Activated naive CD4-positive, alpha-beta T cell treated with anti-CD3 and anti-CD28 coated beads for 36 hours (primary cell): ENCODE measurements at regions of chr7 and their contacts with region 1.

Region 1: GRCh38 chr7:51162724-51163329 is 153.8 kb downstream of the COBL start:
- DNase-seq: peak; percentile 92
- H3K4me3 Mint-ChIP-seq: no peak overlapping the region
- H3K27ac Mint-ChIP-seq: no peak overlapping the region
- H3K4me1 Mint-ChIP-seq: peaks cover 9% of the 10 kb centered on the region
- H3K27me3 Mint-ChIP-seq: peaks cover 12% of the 10 kb centered on the region

Region 2: DNA sequence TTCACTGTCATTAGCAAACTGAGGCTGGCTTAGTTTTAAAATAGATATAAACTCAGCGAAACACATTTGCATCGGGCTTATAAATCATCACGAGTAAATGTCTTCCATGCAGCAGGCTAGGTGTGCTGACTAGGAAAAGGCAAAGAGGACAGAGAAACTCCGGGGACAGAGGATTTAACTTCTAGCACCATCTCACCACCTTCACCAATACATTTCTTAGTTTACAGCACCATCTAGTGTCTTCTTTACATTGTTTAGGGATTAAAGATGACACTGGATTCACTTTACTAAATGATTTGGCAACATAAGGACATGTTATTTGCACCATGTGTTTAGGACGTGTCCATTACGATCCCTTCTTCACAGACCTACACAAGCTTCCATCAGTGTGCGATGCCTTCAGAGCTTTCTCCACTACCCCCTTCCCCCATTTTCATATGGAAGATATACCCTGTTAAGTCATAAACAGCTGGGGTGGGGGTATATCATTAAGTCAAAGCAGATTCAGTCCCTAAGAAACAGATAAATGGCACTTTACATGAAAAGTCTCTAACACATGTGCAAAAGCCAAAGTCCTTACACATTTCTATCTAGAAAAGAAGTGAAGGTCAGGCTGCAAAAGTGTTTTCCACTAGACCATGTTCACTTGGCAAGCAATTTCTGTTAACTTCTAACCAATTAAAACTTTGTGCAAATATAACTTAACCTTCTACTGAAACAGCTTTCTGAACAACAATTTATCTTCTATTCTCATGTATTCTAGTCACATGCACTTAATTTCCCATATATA is 483.4 kb before region 1 on chr7:
- CTCF ChIA-PET with region 1: interaction called, 6 read pairs
- intact Hi-C with region 1: loop called (anchors 5 kb)
- DNase-seq: no peak
- H3K4me3 Mint-ChIP-seq: no peak overlapping the region
- H3K27ac Mint-ChIP-seq: no peak overlapping the region
- H3K4me1 Mint-ChIP-seq: no peaks in the 10 kb centered on the region
- H3K27me3 Mint-ChIP-seq: no peaks in the 10 kb centered on the region

Region 3: DNA sequence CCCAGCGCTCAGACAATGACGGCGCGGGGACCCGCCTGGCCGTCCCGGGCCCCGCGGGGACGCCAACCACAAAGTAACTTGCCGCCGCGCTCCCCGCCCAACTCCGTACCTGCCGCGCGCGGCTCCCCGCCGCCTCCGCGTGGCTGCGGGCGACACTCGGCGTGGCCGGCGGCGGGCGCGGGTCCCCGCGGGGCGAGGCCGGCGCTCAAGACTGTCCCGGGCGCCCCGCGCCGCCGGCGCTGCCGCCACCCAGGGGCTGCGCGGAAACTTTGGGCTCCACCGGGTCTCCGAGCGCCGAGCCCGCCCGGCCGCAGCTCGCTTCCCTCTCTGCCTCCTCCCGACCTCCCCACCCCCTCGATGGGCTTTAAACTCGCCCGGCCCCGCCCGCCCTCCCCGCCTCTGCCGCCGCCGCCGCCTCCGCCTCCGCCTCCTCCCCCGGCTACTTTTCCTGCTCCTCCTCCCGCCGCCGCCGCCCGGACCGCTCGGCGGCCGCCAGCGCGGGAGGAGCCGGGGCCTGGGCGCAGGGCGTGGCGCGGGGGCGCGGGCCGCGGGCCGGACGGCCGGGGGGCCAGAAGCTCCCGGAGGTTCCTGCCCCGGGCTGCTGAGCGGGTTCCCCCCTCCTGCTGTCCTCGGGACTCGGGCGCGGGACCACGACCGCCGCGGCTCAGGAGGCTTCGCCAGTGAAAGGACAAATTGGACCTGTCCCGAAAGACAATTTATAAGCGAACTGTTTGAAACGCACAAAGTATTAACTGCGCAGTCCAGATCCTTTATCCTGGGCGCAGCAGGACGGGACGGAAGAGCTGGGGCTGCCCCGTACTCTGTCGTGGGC is 369.5 kb before region 1 on chr7:
- CTCF ChIA-PET with region 1: interaction called, 4 read pairs
- intact Hi-C with region 1: loop called (anchors 5 kb)
- DNase-seq: peak; percentile 40
- H3K4me3 Mint-ChIP-seq: peak overlapping the region; percentile 63
- H3K27ac Mint-ChIP-seq: no peak overlapping the region
- H3K4me1 Mint-ChIP-seq: peaks cover 17% of the 10 kb centered on the region
- H3K27me3 Mint-ChIP-seq: peaks cover 26% of the 10 kb centered on the region

Region 4: GRCh38 chr7:51141451-51142003 is 21.3 kb before region 1 on chr7:
- CTCF ChIA-PET with region 1: interaction called, 37 read pairs
- intact Hi-C with region 1: no loop called
- DNase-seq: peak; percentile 31
- H3K4me3 Mint-ChIP-seq: no peak overlapping the region
- H3K27ac Mint-ChIP-seq: no peak overlapping the region
- H3K4me1 Mint-ChIP-seq: peaks cover 14% of the 10 kb centered on the region
- H3K27me3 Mint-ChIP-seq: no peaks in the 10 kb centered on the region

Region 5: DNA sequence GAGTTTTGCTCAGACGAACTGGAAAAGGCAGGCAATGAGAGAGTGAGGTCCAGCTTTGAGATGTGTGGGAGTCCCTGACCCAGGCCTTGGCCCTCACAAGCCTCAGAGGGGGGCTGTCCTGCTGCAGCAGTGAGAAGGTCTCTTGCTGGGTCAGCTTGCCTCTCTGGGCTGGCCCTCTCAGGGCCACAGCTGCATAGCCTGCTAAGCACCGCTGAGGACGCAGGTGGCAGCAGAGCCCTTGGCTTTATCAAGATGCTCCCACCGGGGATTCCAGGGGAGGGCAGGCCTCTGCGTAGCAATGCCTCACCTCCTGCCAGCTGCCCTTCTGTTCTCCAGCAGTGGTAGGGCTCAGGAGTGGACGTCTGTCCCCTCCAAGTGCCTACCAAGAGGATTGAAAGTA is 25.1 kb after region 1 on chr7:
- CTCF ChIA-PET with region 1: interaction called, 10 read pairs
- intact Hi-C with region 1: no loop called
- DNase-seq: no peak
- H3K4me3 Mint-ChIP-seq: no peak overlapping the region
- H3K27ac Mint-ChIP-seq: no peak overlapping the region
- H3K4me1 Mint-ChIP-seq: no peaks in the 10 kb centered on the region
- H3K27me3 Mint-ChIP-seq: peaks cover 6% of the 10 kb centered on the region

Region 6: DNA sequence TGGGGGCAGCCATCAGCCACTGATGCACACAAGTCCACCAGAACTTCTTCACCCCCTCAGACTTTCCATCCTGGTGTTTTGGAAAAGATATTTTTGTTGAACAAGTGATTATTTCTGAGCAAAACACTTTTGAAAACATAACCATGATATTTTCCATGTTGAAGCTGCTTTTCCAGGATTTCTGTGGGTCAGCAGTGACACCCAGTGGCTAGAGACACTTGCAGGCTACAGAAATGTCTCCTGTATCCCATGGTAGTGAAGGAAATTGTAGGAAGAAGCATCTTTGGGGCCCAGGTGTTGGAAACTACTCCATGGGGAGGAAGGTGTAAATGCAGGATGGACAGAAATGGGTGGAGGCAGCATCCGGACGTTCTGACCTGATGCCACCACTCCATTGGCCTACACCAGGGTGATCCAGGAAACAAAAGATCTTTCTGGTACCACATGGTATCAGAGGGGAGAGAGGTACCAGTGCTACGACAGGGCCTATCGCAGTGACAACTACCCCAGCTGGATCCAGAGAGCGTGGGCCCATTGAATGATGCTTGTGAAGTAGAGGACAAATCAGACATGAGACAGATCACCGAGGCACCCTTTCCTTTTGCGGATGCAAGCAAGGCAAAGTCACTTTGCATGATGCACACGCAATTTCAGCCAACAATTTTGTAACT is 265.5 kb after region 1 on chr7:
- CTCF ChIA-PET with region 1: interaction called, 12 read pairs
- intact Hi-C with region 1: loop called (anchors 1 kb)
- DNase-seq: peak; percentile 26
- H3K4me3 Mint-ChIP-seq: no peak overlapping the region
- H3K27ac Mint-ChIP-seq: no peak overlapping the region
- H3K4me1 Mint-ChIP-seq: no peaks in the 10 kb centered on the region
- H3K27me3 Mint-ChIP-seq: peaks cover 11% of the 10 kb centered on the region